ENCODE measurements at regions of chr22 and their contacts with region 1.

Region 1: DNA sequence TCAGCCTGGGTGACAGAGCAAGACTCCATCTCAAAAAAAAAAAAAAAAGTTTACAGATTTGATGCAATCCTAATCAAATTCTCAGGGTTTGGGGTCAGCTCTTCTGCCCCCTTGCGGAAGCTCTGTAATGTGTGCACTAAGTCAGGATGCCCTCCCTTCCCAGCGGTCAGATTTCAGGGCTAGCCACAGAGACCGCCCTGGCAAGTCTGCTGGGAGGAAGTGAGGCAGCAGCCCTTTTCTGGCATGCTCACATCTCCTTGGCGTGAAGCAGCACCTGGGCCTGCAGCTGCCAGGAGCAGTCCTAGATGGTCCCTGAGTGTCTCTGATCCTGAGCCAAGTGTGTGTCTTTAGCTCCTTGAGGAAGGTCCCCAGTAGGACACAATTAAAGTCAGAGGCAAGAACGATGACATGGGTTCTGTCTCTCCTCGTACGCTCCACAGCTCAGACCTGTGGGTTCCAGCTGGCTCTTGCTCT is 10.9 kb upstream of the APOBEC3C start:
- DNase-seq: peak; percentile 87
- H3K4me3 ChIP-seq: no peak overlapping the region
- H3K27ac ChIP-seq: no peak overlapping the region
- H3K4me1 ChIP-seq: peaks cover 5% of the 10 kb centered on the region
- H3K27me3 ChIP-seq: no peaks in the 10 kb centered on the region
- CTCF ChIP-seq: peak; percentile 74 to 77

Region 2: DNA sequence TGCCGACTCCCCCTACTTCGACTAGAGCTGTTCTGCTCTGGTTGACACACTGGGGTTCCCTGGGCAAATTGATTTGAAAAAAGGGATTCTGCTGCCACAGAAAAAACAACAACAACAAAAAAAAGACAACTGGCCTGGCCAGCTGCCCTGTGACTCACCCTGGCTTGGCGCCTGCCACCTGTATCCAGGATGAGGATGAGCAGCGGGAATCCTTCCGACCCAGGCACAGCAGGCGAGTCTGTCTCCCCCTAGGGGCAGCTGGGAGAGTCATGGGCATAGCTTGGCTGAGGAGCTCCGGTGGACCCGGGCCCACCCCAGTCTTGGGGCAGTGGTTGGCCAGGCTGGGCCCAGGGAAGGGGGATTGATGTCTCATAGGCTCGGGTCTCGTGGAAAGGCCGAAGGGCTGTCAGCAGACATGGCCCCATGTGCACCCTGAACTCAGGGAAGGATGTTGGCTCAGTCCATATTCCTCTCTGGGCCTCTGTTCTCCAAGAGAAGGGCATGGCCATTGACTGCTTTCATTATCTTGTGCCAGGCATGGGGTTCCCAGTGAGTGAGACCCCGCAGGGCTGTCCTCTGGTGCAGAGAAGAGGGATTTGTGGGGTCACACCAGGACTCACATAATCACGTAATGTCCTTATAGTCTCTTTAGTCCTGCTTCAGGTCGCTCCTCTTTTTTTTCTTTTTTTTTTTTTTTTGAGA is 237.0 kb before region 1 on chr22:
- CTCF ChIA-PET with region 1: interaction called, 23 read pairs
- dilution Hi-C with region 1: no loop called
- in situ Hi-C with region 1: loop called (anchors 10 to 25 kb)
- intact Hi-C with region 1: loop called (anchors 1 kb)
- DNase-seq: peak; percentile 65
- H3K4me3 ChIP-seq: no peak overlapping the region
- H3K27ac ChIP-seq: no peak overlapping the region
- H3K4me1 ChIP-seq: peaks cover 13% of the 10 kb centered on the region
- H3K27me3 ChIP-seq: no peaks in the 10 kb centered on the region
- CTCF ChIP-seq: peak; percentile 96 to 98

Region 3: DNA sequence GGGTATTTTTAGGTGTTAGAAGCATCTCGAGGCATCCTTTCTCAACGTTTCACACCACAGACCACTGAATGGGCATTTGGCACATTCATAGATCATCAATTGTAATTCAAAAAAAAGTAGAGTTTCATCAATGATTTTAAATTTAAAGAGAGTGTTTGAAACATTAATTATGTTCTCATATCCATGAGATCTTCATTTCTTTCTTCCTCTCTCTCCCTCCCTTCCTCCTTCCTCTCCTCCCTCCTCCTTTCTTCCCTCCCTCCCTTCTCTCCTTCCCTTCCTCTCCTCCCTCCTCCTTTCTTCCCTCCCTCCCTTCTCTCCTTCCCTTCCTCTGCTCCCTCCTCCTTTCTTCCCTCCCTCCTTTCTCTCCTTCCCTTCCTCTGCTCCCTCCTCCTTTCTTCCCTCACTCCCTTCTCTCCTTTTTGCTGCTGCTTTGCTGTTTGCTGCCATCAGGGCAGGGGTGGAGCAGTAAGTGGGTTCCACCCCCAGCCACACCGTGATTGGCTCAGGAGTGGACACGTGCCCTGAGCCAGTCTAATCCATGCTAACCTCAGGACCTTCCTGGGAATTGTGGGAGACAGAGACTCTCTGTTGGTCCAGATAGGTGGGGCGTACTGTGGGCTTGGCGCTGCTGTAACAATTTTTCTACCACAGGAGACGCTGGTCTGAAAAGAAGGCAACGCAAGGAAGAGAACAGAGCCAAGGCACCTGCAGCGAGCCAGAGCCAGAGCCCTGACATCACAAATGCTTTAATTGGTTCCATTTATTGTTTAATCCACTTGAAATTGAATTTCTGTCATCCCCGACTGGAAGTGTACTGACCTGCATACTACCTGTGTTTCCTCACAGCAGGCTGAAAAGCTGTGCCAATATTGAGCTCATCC is 79.5 kb before region 1 on chr22:
- CTCF ChIA-PET with region 1: no interaction called
- dilution Hi-C with region 1: no loop called
- in situ Hi-C with region 1: no loop called
- intact Hi-C with region 1: loop called (anchors 2 kb)
- DNase-seq: peak; percentile 83
- H3K4me3 ChIP-seq: peak overlapping the region; percentile 0 to 30 (median 22)
- H3K27ac ChIP-seq: peak overlapping the region; percentile 41
- H3K4me1 ChIP-seq: peaks cover 23% of the 10 kb centered on the region
- H3K27me3 ChIP-seq: no peaks in the 10 kb centered on the region
- CTCF ChIP-seq: peak; percentile 18 to 34

Region 4: GRCh38 chr22:38973289-38974169 is 29.7 kb before region 1 on chr22:
- CTCF ChIA-PET with region 1: interaction called, 16 read pairs
- dilution Hi-C with region 1: no loop called
- in situ Hi-C with region 1: no loop called
- intact Hi-C with region 1: loop called (anchors 1 kb)
- DNase-seq: no peak
- H3K4me3 ChIP-seq: no peak overlapping the region
- H3K27ac ChIP-seq: no peak overlapping the region
- H3K4me1 ChIP-seq: no peaks in the 10 kb centered on the region
- H3K27me3 ChIP-seq: no peaks in the 10 kb centered on the region
- CTCF ChIP-seq: peak; percentile 89 to 98

Region 5: DNA sequence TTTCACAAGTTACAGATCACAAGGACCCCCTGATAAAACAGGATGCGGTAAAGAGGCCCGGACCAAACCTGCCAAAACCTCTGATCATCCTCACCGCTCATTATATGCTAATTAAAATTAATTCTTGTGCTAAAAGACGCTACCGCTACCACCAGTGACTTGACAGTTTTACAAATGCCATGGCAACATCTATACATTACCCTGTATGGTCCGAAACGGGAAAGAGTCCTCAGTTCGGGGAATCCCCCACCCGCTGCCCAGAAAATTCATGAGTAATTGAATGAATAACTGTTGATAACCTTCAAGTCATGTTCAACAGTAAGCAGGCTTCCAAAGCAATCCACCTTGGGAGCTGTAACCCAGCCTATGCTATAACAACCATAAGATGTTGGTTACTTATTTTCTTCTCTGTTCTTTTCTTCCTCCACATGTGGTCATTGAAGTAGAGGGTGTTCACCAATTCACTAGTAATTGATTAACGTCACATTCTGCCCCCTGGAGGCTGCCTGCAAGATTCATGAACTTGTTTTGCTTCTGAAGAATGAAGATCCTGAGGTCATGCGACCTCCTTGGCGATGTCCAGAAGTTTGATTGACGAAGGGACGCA is 114.5 kb after region 1 on chr22:
- CTCF ChIA-PET with region 1: no interaction called
- dilution Hi-C with region 1: no loop called
- in situ Hi-C with region 1: loop called in 1 of 2 experiments (anchors 5 kb)
- intact Hi-C with region 1: loop called (anchors 1 kb)
- DNase-seq: peak; percentile 42
- H3K4me3 ChIP-seq: no peak overlapping the region
- H3K27ac ChIP-seq: no peak overlapping the region
- H3K4me1 ChIP-seq: peaks cover 10% of the 10 kb centered on the region
- H3K27me3 ChIP-seq: no peaks in the 10 kb centered on the region
- CTCF ChIP-seq: peak; percentile 52 to 67

Region 6: GRCh38 chr22:39306581-39307361 is 303.6 kb after region 1 on chr22:
- CTCF ChIA-PET with region 1: interaction called, 8 read pairs
- dilution Hi-C with region 1: no loop called
- in situ Hi-C with region 1: loop called in 1 of 2 experiments (anchors 25 kb)
- intact Hi-C with region 1: loop called (anchors 2 kb)
- DNase-seq: no peak
- H3K4me3 ChIP-seq: no peak overlapping the region
- H3K27ac ChIP-seq: no peak overlapping the region
- H3K4me1 ChIP-seq: peaks cover 36% of the 10 kb centered on the region
- H3K27me3 ChIP-seq: no peaks in the 10 kb centered on the region
- CTCF ChIP-seq: peak; percentile 39 to 54

Measured in mammary epithelial cell (primary cell).